ENCODE measurements at regions of chr2 and their contacts with region 1.

Region 1: DNA sequence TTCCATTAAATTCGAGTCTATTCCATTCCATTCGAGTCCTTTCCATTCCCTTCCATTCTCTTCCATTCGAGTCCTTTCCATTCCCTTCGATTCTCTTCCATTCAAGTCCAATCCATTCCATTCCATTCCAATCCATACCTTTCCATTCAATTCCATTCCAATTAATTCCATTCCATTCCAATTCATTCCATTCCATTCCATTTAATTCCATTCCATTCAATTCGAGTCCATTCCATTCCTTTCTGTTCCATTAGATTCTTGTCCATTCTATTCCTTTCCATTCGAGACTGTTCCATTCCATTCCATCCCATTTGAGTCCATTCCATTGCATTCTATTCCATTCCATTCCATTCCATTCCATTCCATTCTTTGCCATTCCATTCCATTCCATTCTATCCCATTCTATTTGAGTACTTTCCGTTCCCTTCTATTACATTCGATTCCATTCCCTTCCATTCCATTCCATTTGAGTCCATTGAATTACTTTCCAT is 1130.0 kb downstream of the RPIA start:
- DNase-seq: no peak
- H3K4me3 ChIP-seq: no peak overlapping the region
- H3K27ac ChIP-seq: no peak overlapping the region
- H3K4me1 ChIP-seq: no peaks in the 10 kb centered on the region
- H3K27me3 ChIP-seq: no peaks in the 10 kb centered on the region
- CTCF ChIP-seq: no peak
- EP300 ChIP-seq: no peak
- POLR2A ChIP-seq: no peak

Region 2: DNA sequence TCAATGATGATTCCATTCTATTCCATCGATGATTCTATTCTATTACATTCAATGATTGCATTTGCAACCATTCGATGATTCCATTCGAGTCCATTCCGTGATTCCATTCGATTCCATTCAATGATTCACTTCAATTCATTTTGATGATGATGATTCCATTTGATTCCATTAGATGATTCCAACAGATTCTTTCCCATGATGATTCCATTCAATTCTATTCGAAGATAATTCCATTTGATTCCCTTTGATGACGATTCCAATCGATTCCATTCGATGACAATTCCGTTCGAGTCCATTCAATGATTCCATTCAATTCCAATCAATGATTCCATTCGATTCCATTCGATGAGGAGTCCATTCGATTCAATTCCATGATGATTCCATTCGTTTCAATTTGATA is 41.2 kb before region 1 on chr2:
- intact Hi-C with region 1: loop called (anchors 5 kb)
- DNase-seq: no peak
- H3K4me3 ChIP-seq: no peak overlapping the region
- H3K27ac ChIP-seq: no peak overlapping the region
- H3K4me1 ChIP-seq: no peaks in the 10 kb centered on the region
- H3K27me3 ChIP-seq: no peaks in the 10 kb centered on the region
- CTCF ChIP-seq: no peak
- EP300 ChIP-seq: no peak
- POLR2A ChIP-seq: no peak

Region 3: DNA sequence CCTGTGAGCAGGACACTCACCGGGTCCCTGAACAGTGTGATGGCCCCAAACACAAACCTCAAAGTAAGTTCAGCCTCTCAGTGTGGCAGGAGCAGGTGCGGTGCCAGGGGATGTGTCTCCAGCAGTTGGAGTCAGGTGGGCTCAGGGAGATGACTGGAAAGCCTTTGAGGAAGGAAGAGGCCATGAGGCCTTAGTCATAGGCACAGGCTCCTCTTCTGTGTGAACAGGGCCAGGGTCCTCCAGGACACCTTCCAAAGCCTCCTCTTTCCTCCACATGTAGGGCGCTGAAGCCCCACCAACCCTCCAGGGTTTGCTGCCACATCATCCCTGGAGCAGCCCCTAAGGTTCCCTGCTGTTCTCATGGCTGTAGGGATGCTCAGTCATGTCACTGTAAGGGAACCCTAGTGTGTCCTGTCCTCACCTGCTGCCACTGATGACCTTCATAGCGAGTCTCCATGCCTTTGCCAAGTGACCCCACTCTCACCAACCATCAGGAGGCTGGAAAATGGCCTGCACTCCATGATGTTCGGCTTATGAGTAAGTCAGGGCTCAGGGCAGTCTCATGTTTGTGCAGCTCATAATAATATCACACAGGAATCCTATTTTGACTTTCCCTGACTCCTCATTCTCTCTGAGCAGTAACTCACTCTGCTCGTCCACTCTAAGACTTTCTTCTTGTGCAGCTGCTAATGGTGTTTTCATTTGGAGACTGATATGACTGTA is 22.9 kb after region 1 on chr2:
- intact Hi-C with region 1: no loop called
- DNase-seq: peak; percentile 92
- H3K4me3 ChIP-seq: no peak overlapping the region
- H3K27ac ChIP-seq: no peak overlapping the region
- H3K4me1 ChIP-seq: no peaks in the 10 kb centered on the region
- H3K27me3 ChIP-seq: peaks cover 0 to 17% (median 0%) of the 10 kb centered on the region in 4 donors
- CTCF ChIP-seq: no peak
- EP300 ChIP-seq: no peak
- POLR2A ChIP-seq: no peak